Endothelial cell of umbilical vein (primary cell): ENCODE measurements at regions of chr2 and their contacts with region 1.

Region 1: GRCh38 chr2:69715964-69716363 is 26.0 kb upstream of the ANXA4 start:
- DNase-seq: no peak
- H3K4me3 ChIP-seq: no peak overlapping the region
- H3K27ac ChIP-seq: no peak overlapping the region
- H3K4me1 ChIP-seq: no peaks in the 10 kb centered on the region
- H3K27me3 ChIP-seq: no peaks in the 10 kb centered on the region
- CTCF ChIP-seq: no peak
- POLR2A ChIP-seq: no peak

Region 2: DNA sequence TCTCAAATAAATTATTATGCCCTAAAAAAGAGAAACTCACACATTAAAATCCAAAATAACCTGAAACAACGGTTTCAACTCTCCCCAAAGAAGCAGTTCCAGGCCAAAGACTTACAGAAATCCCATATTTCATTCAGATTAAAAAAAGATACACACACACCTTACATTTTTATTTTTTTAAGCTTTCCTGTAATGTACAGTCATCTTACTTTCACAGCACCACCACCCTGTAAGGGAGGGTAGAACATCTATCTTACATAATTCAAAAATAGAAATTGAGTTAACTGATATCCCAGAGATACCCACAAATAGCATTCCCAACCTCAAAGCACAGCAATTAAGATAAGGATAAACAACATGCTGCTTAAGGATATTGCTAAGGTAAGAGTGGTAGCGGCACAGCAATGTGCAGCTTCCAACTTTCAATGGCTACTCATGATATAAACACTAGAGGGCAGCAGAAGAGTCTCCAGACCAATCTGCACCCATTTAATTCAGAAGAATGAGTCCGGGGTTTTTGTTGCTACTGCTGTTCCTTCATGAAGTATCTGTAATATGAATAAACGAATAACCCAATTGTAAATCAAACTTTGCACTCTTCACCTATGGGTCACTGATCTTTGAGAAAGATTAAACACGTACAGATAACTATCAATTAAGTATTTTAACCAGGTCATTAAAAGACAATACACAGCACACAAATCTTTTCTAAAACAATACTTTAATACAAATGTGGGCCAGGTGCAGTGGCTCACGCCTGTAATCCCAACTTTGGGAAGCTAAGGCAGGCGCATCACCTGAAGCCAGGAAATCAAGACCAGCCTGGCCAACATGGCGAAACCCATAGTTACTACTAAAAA is 340.2 kb before region 1 on chr2:
- CTCF ChIA-PET with region 1: interaction called, 3 read pairs
- POLR2A ChIA-PET with region 1: no interaction called
- dilution Hi-C with region 1: no loop called
- intact Hi-C with region 1: loop called (anchors 1 kb)
- DNase-seq: peak; percentile 40
- H3K4me3 ChIP-seq: no peak overlapping the region
- H3K27ac ChIP-seq: no peak overlapping the region
- H3K4me1 ChIP-seq: no peaks in the 10 kb centered on the region
- H3K27me3 ChIP-seq: no peaks in the 10 kb centered on the region
- CTCF ChIP-seq: peak; percentile 39 to 47
- POLR2A ChIP-seq: no peak

Region 3: DNA sequence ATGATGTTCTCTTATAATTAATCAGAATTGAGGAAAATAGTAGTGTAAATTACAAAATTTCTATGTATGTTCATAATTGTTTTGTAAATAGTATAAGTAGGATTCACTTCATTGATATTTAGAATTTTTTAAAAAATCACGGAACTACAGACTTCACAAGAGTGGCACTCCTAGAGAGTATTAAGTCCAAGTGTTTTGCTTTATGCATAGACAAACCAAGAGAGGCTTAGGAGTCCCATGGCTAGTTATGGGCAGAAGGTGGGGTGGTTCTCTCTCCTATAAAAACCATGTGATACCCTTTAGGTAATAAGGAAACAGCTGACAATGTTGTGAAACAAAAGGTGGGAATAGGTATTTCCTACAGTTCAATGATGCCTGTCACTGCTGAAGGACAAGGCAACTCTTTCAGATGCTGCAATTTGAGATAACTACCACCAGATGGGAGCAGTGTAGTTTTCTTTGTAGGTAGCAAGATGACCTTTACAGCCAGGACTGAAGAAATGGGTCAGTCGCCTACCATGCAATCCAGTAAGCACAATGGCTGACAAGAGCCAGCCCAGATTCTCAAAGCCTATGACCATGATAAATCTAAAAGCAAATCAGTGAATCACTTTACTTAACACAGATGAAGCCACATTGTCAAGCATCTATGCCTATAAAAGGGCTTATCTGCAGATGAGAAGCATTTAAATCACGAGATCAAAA is 156.4 kb before region 1 on chr2:
- CTCF ChIA-PET with region 1: interaction called, 26 read pairs
- POLR2A ChIA-PET with region 1: interaction called, 14 read pairs
- dilution Hi-C with region 1: no loop called
- intact Hi-C with region 1: loop called (anchors 1 kb)
- DNase-seq: peak; percentile 69
- H3K4me3 ChIP-seq: no peak overlapping the region
- H3K27ac ChIP-seq: no peak overlapping the region
- H3K4me1 ChIP-seq: peaks cover 21% of the 10 kb centered on the region
- H3K27me3 ChIP-seq: no peaks in the 10 kb centered on the region
- CTCF ChIP-seq: peak; percentile 50 to 51
- POLR2A ChIP-seq: no peak

Region 4: DNA sequence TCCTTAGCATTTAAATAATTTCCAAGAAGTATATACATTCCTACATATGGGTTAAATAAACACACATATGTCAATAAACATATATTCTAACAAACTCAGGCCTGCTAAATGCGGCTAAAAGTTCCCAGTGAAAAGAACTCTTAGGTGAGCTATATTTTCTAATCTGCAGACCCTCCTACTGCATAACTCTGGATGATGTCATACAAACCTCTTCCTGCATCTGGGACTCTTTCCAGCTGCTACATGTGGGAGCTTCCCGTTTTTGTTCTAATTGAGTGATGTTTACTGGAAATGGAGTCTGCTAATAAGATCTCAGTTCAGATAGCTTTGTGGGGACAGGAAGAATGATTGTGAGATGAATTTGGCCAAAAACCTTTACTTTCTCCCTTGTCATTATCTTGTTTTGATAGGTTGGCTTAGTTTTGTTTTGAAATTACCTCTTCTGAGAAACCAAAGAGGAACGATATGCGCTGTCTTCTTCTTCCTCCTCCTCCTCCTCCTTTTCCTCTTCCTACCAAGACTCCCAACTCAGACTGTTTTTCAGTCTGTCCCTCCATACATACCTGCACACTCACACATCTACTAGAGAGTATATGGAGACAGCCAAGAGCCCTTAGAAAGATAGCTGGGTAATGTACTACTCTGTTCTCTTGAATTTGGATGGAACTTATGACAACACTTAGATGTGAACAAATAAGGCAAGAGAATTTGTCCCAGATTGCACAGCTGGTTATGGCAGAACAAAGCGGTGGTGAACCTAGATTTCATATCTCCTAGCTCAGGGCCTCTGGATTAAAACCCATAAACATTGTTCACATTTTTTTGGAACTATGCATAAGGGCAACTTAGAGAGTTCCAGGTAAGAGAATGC is 32.6 kb before region 1 on chr2:
- CTCF ChIA-PET with region 1: interaction called, 3 read pairs
- POLR2A ChIA-PET with region 1: no interaction called
- dilution Hi-C with region 1: no loop called
- intact Hi-C with region 1: loop called (anchors 2 kb)
- DNase-seq: peak; percentile 98
- H3K4me3 ChIP-seq: peak overlapping the region in 1 of 3 experiments; percentile 39
- H3K27ac ChIP-seq: peak overlapping the region; percentile 87
- H3K4me1 ChIP-seq: peaks cover 36% of the 10 kb centered on the region
- H3K27me3 ChIP-seq: no peaks in the 10 kb centered on the region
- CTCF ChIP-seq: no peak
- POLR2A ChIP-seq: peak; percentile 80

Region 5: DNA sequence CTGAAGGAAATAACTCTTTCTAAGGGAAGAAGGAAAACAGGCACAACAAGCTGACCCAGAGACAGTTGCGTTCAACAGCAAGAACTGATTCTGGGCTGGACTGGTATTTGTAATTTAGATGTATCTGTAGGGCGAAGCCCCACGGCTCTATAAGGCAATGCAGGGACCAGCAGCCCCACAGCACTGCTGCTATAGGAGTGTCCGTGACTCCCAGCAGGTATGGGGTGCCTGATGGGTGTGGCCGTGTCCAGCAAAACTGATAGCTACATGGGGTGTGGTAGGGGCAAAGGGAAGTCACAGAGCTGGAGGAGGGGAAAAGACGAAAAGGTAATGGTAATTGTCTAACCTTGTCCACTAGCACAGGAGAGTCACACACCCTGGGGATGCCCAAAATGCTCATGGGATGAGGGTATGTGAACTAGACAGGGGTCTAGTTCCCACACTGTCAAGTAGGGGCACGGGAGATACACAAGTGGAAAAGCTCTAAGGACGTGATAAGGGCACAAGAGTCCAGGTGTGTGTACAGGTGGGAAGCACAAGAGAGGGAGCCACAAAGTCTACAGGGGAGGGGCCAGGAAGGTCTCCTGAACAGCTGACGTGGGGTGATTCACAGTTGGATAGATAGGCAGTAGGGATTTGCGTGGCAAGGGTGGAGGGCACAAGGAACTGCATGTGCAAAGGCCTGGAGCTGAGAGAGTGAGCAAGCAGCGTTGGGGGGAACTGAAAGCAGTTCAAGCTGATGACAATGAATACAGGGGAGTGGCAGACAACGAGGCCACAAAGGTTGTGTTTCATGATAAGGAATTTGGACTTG is 294.0 kb after region 1 on chr2:
- CTCF ChIA-PET with region 1: no interaction called
- POLR2A ChIA-PET with region 1: no interaction called
- dilution Hi-C with region 1: no loop called
- intact Hi-C with region 1: no loop called
- DNase-seq: no peak
- H3K4me3 ChIP-seq: no peak overlapping the region
- H3K27ac ChIP-seq: no peak overlapping the region
- H3K4me1 ChIP-seq: no peaks in the 10 kb centered on the region
- H3K27me3 ChIP-seq: no peaks in the 10 kb centered on the region
- CTCF ChIP-seq: no peak
- POLR2A ChIP-seq: no peak

Region 6: GRCh38 chr2:70482401-70482800 is 766.4 kb after region 1 on chr2:
- CTCF ChIA-PET with region 1: no interaction called
- POLR2A ChIA-PET with region 1: no interaction called
- dilution Hi-C with region 1: no loop called
- intact Hi-C with region 1: no loop called
- DNase-seq: no peak
- H3K4me3 ChIP-seq: no peak overlapping the region
- H3K27ac ChIP-seq: no peak overlapping the region
- H3K4me1 ChIP-seq: no peaks in the 10 kb centered on the region
- H3K27me3 ChIP-seq: peaks cover 16 to 29% of the 10 kb centered on the region in 2 experiments
- CTCF ChIP-seq: no peak
- POLR2A ChIP-seq: no peak